ENCODE measurements at regions of chr5 and their contacts with region 1.

Region 1: DNA sequence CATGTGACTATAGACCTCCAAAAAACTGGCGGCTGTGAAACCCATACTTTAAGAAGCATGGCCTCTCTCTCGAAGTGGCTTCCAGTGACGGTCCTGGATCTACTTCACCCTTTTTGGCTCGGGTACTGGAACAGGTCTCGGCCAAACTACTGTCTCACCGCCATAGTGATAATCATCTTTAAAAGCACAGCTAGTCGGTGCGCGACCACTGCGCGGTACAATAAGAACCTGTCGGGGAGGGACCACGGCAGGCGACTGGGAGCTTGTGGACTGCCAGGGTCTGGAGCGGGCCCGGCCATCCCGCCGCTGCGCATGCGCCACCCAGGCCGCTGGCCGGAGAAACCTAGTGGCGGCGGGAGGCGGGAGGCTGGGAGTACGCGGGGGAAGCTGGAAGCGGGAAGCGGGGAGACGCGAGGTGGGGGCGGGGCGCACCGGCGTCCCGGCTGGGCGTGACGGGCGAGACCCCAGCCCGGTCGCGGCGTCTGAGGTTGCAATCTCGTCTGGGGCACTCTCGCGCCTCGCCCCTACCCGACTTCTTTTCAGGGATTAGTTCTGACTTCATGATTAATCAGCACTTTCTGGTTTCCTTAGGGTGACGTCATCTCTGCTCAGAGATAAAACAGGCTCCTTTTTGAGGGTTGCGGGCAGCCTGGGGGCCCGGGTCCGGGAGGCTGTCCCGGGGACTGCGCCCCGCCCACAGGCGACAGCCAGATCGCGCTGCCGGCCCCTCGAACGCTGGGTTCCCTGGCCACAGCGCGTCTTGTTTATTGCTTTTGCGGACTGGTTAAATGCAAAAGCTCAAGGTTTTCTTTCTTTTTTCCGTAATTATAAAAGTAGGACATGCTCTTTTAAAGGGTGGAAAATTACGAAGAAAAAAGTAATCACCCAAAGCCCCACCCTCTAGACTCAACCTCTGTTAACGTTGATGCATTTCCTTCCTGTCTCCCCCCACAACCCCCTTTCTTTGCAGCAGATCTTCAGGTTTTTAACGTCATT is 266.8 kb downstream of the CWC27 start:
- DNase-seq: peak; percentile 90 to 95
- ATAC-seq: peak; percentile 95 to 99 (median 96)
- H3K4me3 ChIP-seq: peak overlapping the region; percentile 81
- H3K27ac ChIP-seq: peak overlapping the region; percentile 85
- H3K4me1 ChIP-seq: peaks cover 13% of the 10 kb centered on the region
- H3K27me3 ChIP-seq: no peaks in the 10 kb centered on the region
- CTCF ChIP-seq: no peak

Region 2: DNA sequence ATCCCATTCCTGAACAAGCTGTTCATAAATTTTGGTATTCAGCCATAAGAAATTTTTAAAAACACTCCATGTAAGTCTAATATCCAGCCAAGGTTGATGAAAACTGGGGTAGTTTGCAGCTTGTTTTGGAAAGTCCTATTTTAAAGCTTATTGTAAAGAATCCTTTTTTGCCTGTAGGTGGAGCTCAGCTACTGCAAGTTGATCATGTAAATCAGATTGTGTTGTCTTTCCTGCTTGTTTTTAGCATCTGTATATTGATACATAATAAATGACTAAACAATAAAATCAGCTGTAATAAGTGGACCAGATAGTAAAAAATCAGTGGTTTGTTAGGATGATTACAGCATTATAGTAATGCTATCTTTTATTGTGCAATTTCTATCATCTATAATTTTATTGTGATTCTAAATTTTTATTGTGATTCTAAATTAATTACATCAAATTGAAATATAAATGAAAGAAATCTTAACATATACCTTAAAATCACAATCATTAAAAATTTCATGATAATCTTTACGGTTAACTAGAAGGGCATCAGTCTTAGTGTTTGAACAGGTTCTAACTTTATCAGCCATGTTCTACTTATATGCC is 224.4 kb before region 1 on chr5:
- intact Hi-C with region 1: loop called in 1 of 2 experiments (anchors 10 kb)
- DNase-seq: no peak
- ATAC-seq: peak in 2 of 4 donors; percentile 55 to 81
- H3K4me3 ChIP-seq: no peak overlapping the region
- H3K27ac ChIP-seq: no peak overlapping the region
- H3K4me1 ChIP-seq: no peaks in the 10 kb centered on the region
- H3K27me3 ChIP-seq: no peaks in the 10 kb centered on the region
- CTCF ChIP-seq: peak; percentile 77

Region 3: DNA sequence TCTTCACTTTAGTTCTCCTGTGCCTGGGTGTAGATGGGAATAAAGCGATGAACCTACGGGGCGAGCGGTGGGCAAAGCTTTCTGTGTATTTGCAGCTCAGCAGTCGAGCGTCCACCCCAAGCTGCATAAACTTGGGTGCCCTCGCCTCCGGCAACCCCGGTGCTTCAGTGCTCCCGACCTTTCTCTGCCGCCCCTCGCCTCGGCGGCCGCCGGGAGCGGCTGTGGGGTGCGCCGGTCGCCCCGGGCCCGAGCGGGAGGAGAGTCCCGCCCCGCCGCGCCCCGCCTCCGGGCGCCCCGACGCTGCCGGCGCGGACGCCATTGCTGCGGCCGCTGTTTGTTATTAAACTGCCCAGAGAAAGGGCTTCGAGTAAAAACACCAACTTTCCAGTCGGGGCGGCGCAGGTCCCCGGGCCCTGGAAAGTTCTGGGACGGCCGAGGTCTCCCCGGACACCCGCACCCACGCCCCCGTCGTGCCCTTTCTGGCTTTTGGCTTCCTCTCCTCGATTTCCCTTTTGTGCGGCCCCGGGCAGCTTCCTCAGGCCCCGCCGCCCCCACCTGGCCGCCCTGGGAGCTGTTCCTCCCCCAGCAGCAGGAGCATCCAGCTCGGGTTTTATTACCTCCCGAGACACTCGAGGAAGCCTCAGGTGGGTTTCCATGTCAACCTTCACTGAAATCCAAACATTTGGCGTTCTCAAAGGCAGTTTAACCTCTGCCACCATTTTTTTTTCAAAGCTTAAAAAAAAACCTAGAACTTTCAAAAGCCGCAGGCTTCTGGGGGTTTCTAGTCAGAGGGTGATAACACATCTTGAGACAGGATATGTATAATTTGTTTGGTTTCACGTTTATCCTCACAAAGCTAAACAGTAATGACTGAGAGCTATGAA is 67.6 kb after region 1 on chr5:
- intact Hi-C with region 1: loop called in 1 of 2 experiments (anchors 5 kb)
- DNase-seq: peak; percentile 51 to 71
- ATAC-seq: peak; percentile 57 to 86 (median 73)
- H3K4me3 ChIP-seq: peak overlapping the region; percentile 81
- H3K27ac ChIP-seq: peak overlapping the region; percentile 74
- H3K4me1 ChIP-seq: peaks cover 4% of the 10 kb centered on the region
- H3K27me3 ChIP-seq: no peaks in the 10 kb centered on the region
- CTCF ChIP-seq: peak; percentile 25

Measured in psoas muscle (tissue), 8 donors.